ENCODE measurements at regions of chr4 and their contacts with region 1.

Region 1: GRCh38 chr4:21790438-21791029 is 158.0 kb downstream of the KCNIP4 start:
- DNase-seq: no peak
- ATAC-seq: no peak

Region 2: GRCh38 chr4:21753084-21753760 is 37.3 kb before region 1 on chr4:
- intact Hi-C with region 1: no loop called
- DNase-seq: no peak
- ATAC-seq: no peak

Region 3: GRCh38 chr4:22021116-22021515 is 230.6 kb after region 1 on chr4:
- intact Hi-C with region 1: no loop called
- DNase-seq: no peak
- ATAC-seq: no peak

Region 4: DNA sequence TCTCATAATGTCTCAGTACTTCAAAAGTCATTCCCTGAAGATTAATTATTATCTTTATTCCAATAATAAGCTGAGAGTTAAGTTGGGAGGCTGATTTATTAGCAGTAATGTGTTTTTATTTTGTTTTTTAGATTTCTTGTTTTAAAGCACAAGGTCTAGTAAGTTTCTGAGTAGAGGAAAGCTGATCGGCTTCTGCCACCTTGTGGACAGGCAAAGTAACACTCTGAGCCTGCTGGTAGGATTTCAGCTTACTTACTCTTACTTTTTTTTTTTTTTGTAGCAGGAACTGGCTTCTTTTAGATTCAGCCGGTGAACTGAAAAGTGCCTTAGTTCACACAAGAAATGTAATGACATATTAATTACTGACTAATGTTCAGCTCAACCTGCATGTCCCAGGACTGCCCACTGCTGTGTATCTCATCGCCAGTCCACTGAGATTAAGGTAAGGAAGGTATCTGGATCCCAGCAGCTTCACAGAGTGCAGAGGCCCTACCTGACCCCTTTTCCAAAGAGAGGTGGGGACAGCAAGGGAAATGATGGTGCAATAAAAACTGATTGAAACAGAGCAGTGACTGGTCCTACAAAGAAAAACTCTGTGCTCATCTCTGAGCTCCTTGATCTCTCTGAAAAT is 598.8 kb after region 1 on chr4:
- intact Hi-C with region 1: loop called (anchors 5 kb)
- DNase-seq: no peak
- ATAC-seq: peak; percentile 74

Region 5: DNA sequence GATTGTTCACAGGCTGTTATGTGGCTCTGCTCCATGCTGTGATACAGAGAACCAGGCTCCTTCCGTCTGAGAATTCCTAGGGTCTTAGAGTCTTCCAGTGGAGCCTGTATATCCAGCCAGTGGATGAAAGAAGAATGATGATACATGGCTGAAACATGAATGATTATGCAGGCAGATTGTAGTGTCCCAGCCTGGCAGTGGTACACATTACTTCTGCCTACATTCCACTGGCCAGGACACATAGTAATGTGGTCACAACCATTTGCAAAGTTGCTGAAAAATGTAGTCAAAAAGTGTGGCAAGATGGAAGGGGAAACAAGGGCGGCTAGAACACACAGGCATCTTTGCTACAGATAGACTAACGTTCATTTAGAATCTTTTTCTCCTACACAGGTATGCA is 897.7 kb after region 1 on chr4:
- intact Hi-C with region 1: loop called (anchors 5 kb)
- DNase-seq: no peak
- ATAC-seq: no peak

Measured in Right ventricle myocardium superior (tissue), 1 donor.